Activated naive CD4-positive, alpha-beta T cell treated with anti-CD3 and anti-CD28 coated beads for 36 hours (primary cell): ENCODE measurements at regions of chr2 and their contacts with region 1.

Region 1: DNA sequence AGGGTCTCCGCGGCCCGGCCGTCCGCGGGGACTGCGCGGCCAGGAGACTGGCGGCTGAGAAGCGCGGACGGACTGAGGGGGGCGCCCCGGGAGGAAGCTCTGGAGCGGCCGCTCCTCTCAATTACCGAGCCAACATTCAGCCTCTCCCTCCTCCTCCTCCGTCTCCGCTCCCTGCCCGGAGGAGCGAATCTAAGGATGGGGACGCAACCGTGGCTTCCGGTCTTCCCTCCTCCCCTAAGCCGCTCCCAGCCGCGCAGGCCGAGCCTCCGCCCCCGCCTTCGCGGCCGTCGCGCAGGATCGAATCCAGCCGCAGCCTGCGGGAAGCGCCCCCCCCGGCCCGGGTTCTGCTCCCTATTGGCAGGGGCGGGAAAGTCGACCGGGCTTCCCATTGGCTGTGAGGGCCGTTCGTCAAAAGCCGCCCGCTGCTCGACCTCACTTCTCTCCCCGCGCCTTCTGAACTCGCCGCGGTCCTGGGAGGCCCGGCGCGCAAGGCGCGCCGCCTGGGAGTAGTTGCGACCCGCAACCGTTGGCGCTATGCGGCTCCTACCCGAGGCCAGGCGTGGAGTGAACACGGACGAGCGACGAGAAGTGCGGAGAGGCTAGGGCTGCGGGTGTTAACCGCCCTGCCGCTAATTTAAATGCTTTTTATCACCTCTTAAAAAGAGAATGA is at the start of gene HNRNPLL:
- DNase-seq: peak; percentile 98
- H3K4me3 Mint-ChIP-seq: peak within 1 kb of the TSS; percentile 90
- H3K27ac Mint-ChIP-seq: peak within 1 kb of the TSS; percentile 92
- H3K4me1 Mint-ChIP-seq: peaks cover 52% of the 10 kb centered on the region
- H3K27me3 Mint-ChIP-seq: no peaks in the 10 kb centered on the region
- total RNA-seq, gene HNRNPLL: 54.4 to 57.3 TPM

Region 2: DNA sequence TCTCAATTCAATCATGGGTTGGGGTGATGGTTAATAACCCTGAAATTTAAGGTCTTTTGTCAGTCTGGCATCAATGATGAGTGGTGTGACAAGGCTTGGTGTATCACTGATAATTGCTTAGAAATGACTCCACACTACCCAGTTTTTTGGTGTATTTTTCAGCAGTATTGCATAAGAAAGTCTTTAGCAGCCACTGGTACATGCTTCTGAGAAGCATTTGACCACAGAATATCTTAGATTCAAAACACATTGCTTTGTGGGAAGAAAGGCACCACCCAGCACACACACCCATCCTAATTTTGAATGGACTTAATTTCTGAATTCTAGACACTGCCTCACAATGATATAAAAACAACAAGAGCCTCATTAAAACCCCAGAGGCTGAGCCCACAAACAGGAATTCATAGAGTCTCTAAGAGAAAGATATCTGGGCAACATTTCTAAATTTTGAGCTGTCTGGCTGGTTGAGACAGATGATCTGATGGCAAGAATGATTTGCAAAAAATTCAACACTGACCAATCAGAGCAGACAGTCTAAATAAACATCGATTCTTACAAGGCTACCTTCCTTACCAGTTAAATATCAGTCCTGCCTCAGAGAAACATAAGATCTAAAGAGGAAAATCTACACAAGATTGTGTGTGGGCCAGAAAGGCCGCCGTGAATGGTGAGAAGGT is 412.2 kb before region 1 on chr2:
- CTCF ChIA-PET with region 1: no interaction called
- intact Hi-C with region 1: no loop called
- DNase-seq: no peak
- H3K4me3 Mint-ChIP-seq: no peak overlapping the region
- H3K27ac Mint-ChIP-seq: no peak overlapping the region
- H3K4me1 Mint-ChIP-seq: peaks cover 4% of the 10 kb centered on the region
- H3K27me3 Mint-ChIP-seq: no peaks in the 10 kb centered on the region

Region 3: DNA sequence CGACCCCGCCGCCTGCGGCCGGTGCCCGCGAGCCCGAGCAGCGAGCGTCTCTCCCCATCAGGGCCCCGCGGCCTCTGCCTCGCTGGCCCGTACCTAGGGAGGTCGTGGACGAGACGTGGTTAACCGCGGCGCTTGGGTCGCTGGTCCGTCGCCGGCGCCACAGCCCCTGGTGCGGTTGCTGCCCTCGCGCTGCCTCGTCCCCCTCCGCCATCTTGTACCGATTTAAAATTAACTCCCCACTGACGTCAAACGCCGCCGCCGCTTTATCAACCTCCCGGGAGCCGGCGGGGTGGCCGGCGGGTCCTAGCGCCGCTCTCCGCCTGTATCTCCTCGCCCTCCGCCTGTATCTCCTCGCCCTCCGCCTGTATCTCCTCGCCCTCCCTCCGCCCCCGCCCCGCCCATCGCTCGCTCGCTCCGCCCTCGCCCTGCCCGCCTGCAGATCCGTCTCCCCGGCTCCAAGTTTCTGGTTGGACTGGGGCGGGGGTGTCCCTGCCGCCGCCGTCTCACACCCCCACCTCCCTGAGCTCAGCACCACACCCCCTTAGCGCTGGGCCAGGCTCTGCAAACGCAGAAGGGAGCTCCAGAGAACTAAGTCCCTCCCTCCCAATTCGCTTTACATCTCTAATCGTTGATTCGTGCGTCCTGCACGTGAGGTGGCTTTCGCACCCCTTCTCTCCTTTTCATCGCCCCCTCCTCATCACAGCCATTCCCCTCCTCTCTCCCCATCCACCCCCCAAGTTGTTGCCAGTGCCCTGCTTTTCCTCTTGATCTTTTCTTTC is 225.6 kb before region 1 on chr2 and contains the start of gene ATL2:
- CTCF ChIA-PET with region 1: no interaction called
- intact Hi-C with region 1: loop called (anchors 2 kb)
- DNase-seq: peak; percentile 96
- H3K4me3 Mint-ChIP-seq: peak within 1 kb of the TSS; percentile 90
- H3K27ac Mint-ChIP-seq: peak within 1 kb of the TSS; percentile 78
- H3K4me1 Mint-ChIP-seq: peaks cover 55% of the 10 kb centered on the region
- H3K27me3 Mint-ChIP-seq: no peaks in the 10 kb centered on the region
- total RNA-seq, gene ATL2: 54.6 to 55.9 TPM

Region 4: DNA sequence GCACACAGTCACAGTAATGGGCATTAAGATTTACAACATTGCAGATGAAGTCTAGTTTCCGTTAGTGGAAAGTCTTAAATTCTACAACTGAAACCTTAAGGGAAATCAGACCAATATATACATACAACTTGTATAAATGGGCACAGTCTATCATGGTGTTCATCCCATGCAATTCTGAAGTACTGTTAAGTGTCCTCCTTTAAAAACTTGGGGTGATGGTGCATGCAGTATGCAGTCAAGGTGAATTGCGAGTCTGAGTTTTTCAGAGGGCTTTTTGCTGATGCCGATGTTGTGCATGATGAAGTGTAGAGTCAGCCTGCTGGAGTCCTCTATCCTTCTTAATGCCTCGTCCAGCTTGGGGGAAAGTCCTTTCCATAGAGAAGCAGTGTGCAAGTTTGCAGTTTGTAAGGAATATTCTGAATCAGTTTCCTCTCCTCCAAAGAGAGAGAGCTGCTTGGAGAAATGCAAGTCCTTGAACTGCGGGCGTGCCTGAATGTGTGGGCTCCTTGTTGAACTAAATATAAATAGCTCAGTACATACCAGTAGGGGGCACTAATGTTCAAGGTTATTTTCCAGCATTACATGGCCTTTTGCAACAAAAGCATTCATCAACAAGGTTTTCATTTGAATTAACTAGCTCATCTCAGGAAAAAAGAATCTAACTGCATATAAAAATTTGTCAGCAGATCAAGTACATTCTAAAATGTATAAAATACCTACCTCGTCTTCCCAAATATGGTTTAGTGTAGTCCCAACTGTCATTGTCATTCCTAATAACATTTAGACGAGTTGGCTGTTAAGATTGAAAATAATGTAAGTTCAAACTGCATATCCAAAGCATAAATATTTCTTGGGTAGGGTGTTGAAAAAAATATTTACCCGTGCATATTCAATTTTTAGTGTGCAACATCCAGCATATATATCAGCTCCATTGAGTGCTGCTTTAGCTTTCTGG is 21.4 kb before region 1 on chr2:
- CTCF ChIA-PET with region 1: interaction called, 54 read pairs
- intact Hi-C with region 1: loop called (anchors 1 kb)
- DNase-seq: peak; percentile 31
- H3K4me3 Mint-ChIP-seq: no peak overlapping the region
- H3K27ac Mint-ChIP-seq: no peak overlapping the region
- H3K4me1 Mint-ChIP-seq: peaks cover 19% of the 10 kb centered on the region
- H3K27me3 Mint-ChIP-seq: no peaks in the 10 kb centered on the region

Region 5: DNA sequence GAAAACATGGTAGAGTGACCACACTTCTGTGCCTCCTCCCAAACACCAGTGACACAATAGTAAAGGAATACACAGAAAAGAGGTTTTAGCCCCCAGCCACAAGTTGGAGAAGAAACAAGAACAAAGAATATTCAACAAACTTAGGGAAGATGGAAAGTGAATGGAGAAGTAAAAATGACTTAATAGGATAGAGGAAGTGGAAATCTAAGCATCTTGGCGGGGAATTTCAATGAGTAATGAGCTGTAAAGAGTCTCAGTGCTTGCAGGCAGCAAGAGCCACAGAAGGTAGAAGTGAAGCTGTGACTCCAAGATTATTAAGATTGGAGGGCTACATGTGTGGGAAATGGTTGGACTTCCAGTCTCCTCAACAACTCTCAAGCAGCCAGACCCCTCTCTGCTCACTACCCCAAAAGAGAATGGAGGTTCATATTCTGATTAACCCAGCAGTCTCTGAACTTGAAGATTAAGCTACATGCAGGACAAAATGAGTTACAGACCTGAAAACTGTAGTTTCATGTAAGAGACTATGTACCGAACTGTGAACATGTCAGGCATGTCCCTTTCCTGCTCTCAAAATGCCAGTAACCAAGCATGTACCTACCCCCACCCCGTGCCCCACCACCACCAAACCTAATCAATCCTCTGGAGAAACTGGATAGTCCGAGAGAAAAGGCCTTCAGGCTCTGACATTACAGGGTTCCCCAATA is 16.7 kb after region 1 on chr2:
- CTCF ChIA-PET with region 1: interaction called, 18 read pairs
- intact Hi-C with region 1: loop called (anchors 1 kb)
- DNase-seq: no peak
- H3K4me3 Mint-ChIP-seq: no peak overlapping the region
- H3K27ac Mint-ChIP-seq: no peak overlapping the region
- H3K4me1 Mint-ChIP-seq: peaks cover 21% of the 10 kb centered on the region
- H3K27me3 Mint-ChIP-seq: peaks cover 6% of the 10 kb centered on the region

Region 6: DNA sequence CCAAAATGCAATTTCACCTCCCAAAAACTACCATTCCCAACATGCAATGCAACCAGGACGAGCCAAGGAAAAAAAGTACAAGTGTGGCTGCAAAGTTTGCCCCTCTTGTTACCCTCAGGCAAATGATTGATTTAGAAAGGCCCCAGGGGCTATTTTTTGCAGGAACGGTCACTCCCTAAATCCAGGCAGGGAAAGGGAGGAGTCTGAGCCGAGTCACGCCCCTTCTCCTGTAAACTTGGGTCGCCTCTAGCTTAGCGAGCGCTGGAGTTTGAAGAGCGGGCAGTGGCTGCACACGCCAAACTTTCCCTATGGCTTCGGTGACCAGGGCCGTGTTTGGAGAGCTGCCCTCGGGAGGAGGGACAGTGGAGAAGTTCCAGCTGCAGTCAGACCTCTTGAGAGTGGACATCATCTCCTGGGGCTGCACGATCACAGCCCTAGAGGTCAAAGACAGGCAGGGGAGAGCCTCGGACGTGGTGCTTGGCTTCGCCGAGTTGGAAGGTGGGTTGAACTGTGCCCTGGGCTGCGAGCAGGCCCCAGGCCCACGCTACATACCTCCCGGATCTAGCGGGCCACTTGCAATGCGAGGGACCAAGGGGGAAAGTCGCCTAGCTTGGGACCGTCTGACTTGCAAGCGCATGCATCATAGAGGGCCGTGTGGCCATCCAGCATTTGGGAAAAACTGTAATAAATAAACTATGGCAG is 63.1 kb after region 1 on chr2 and contains the start of gene GALM:
- CTCF ChIA-PET with region 1: interaction called, 40 read pairs
- intact Hi-C with region 1: loop called (anchors 1 kb)
- DNase-seq: peak; percentile 68
- H3K4me3 Mint-ChIP-seq: peak within 1 kb of the TSS; percentile 83
- H3K27ac Mint-ChIP-seq: peak within 1 kb of the TSS; percentile 97
- H3K4me1 Mint-ChIP-seq: peaks cover 69% of the 10 kb centered on the region
- H3K27me3 Mint-ChIP-seq: no peaks in the 10 kb centered on the region
- total RNA-seq, gene GALM: 31.3 to 31.9 TPM

Region 7: DNA sequence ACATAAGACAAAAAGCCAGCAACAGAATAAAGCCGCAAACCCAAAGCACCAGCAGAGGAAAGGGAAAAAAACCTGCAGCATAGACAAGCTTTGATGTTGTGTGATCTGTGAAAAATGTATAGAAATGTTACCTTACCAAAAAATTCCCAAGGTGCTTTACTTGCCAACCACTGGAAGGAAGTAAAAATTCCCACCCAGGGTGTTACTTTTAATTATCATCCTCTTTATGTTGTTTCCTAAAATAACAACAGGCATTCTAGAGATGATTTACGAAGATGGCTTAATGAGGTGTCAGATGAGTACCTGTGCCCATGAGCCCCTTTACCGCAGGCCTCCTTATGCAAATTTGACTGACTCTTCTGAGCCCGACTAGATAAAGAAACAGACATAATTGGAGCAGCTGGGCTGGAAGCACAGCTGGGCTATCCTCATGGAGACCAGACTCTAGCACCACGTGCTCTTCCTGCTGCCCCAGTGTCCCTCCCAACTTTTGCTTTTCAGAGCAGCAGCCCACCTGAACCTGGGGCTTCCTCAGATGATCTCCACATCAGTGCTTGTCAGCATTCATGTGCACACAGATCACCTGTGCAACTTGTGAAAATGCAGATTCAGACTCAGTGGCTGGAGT is 106.8 kb after region 1 on chr2:
- CTCF ChIA-PET with region 1: interaction called, 24 read pairs
- intact Hi-C with region 1: loop called (anchors 1 kb)
- DNase-seq: peak; percentile 80
- H3K4me3 Mint-ChIP-seq: peak overlapping the region; percentile 49
- H3K27ac Mint-ChIP-seq: peak overlapping the region; percentile 95
- H3K4me1 Mint-ChIP-seq: peaks cover 68% of the 10 kb centered on the region
- H3K27me3 Mint-ChIP-seq: no peaks in the 10 kb centered on the region

Region 8: GRCh38 chr2:38750891-38751595 is 148.2 kb after region 1 on chr2 and contains the start of gene SRSF7:
- CTCF ChIA-PET with region 1: interaction called, 3 read pairs
- intact Hi-C with region 1: loop called (anchors 1 kb)
- DNase-seq: peak; percentile 97
- H3K4me3 Mint-ChIP-seq: peak within 1 kb of the TSS; percentile 100
- H3K27ac Mint-ChIP-seq: peak within 1 kb of the TSS; percentile 100
- H3K4me1 Mint-ChIP-seq: peaks cover 52% of the 10 kb centered on the region
- H3K27me3 Mint-ChIP-seq: peaks cover 3% of the 10 kb centered on the region
- total RNA-seq, gene SRSF7: 212 to 217 TPM